CD8-positive, alpha-beta T cell (primary cell): ENCODE measurements at regions of chr6 and their contacts with region 1.

Region 1: DNA sequence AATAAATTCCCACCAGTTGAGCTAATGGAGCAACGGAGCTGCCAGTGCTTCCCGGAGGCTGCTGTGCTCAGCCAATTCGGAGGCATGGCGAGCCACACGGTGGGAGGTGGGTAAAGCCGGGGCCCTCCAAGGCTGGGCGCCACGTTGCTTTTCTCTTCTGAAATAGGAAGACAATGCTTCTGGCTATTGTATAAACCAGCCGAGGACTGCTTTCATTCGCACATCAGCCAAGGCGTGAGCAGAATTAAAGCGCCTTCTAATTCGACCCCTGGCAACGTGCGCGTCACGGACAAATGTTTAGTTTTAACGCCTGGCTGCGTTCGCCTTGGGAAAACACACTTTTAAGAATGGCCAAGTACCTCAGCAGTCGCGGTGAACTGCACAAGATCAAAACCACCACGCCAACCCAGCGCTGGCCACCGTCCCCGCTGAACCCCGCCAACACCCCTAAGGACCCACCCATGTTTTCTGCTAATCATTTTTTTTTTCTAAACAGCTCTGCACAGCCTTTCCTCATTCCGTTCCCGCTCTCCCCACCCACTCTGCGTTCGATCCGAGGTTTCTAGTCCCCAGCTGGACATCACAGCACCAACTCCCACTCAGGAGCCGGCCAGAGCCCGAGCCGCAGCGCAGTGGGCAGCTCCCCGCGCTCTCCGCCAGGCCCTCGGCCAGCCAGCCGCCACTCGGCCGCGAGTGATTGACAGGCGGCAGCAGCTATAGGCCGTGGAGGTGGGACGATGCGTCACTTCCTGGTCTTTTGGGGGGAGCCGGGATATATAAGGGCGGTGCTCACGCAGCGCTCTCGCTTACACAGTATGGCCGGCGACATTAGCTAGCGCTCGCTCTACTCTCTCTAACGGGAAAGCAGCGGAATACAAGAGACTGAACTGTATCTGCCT is at the start of gene AMD1:
- DNase-seq: peak; percentile 89 to 98 (median 96)
- ATAC-seq: peak; percentile 71
- H3K4me3 ChIP-seq: peak within 1 kb of the TSS; percentile 83 to 90
- H3K4me3 Mint-ChIP-seq: peak within 1 kb of the TSS; percentile 99
- H3K27ac ChIP-seq: peak within 1 kb of the TSS; percentile 92 to 95
- H3K27ac Mint-ChIP-seq: peak within 1 kb of the TSS; percentile 99
- H3K4me1 ChIP-seq: peaks cover 25% of the 10 kb centered on the region
- H3K4me1 Mint-ChIP-seq: peaks cover 33% of the 10 kb centered on the region
- H3K27me3 ChIP-seq: no peaks in the 10 kb centered on the region
- H3K27me3 Mint-ChIP-seq: no peaks in the 10 kb centered on the region
- CTCF ChIP-seq: no peak
- total RNA-seq, gene AMD1: 161 to 167 TPM

Region 2: DNA sequence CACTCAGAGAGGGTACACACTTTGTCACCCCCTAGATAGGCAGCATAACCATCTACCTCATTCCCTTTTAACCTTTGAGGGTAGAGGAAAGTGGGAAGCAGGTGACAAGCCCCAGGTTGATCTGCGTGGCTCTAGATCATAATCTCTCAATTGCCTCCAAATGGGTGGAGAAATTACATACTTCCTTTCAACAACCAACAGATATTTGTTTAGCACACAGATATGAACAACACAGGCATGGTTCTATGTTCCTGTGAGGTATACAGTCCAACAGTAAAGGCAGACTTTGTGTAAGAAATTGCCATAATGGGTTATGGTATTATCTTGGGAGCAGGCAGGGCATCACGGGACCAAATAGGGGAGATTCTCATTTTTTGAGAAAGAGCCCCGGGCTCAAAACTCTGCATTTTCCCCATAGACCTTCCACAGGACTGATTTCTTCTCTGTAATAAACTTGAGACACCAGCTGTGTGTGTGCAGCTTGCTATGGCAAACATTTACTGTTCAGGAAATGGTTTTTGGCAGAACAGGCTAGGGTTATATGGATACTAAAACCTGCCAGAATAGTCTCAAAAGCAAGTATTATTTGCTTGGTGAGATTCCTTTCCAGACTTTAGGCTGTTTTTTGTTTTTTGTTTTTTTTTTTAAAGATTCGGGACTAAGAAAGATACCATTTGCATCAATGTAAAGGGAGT is 1618.1 kb before region 1 on chr6:
- CTCF ChIA-PET with region 1: no interaction called
- POLR2A ChIA-PET with region 1: no interaction called
- intact Hi-C with region 1: no loop called
- DNase-seq: no peak
- ATAC-seq: no peak
- H3K4me3 ChIP-seq: no peak overlapping the region
- H3K4me3 Mint-ChIP-seq: no peak overlapping the region
- H3K27ac ChIP-seq: no peak overlapping the region
- H3K27ac Mint-ChIP-seq: no peak overlapping the region
- H3K4me1 ChIP-seq: no peaks in the 10 kb centered on the region
- H3K4me1 Mint-ChIP-seq: no peaks in the 10 kb centered on the region
- H3K27me3 ChIP-seq: no peaks in the 10 kb centered on the region
- H3K27me3 Mint-ChIP-seq: peaks cover 5% of the 10 kb centered on the region
- CTCF ChIP-seq: no peak

Region 3: GRCh38 chr6:109690737-109691621 is 1183.3 kb before region 1 on chr6 and contains the starts of genes AK9 and FIG4:
- CTCF ChIA-PET with region 1: no interaction called
- POLR2A ChIA-PET with region 1: interaction called, 6 read pairs
- intact Hi-C with region 1: loop called in 1 of 2 experiments (anchors 2 kb)
- DNase-seq: peak; percentile 68 to 93 (median 90)
- ATAC-seq: peak; percentile 96
- H3K4me3 ChIP-seq: peak within 1 kb of the TSS; percentile 85 to 91
- H3K4me3 Mint-ChIP-seq: peak within 1 kb of the TSS; percentile 93
- H3K27ac ChIP-seq: peak within 1 kb of the TSS; percentile 81 to 91
- H3K27ac Mint-ChIP-seq: peak within 1 kb of the TSS; percentile 98
- H3K4me1 ChIP-seq: peaks cover 22% of the 10 kb centered on the region
- H3K4me1 Mint-ChIP-seq: peaks cover 27% of the 10 kb centered on the region
- H3K27me3 ChIP-seq: no peaks in the 10 kb centered on the region
- H3K27me3 Mint-ChIP-seq: no peaks in the 10 kb centered on the region
- CTCF ChIP-seq: no peak
- total RNA-seq, gene AK9: 5.1 to 6.5 TPM
- total RNA-seq, gene FIG4: 2.3 TPM

Region 4: DNA sequence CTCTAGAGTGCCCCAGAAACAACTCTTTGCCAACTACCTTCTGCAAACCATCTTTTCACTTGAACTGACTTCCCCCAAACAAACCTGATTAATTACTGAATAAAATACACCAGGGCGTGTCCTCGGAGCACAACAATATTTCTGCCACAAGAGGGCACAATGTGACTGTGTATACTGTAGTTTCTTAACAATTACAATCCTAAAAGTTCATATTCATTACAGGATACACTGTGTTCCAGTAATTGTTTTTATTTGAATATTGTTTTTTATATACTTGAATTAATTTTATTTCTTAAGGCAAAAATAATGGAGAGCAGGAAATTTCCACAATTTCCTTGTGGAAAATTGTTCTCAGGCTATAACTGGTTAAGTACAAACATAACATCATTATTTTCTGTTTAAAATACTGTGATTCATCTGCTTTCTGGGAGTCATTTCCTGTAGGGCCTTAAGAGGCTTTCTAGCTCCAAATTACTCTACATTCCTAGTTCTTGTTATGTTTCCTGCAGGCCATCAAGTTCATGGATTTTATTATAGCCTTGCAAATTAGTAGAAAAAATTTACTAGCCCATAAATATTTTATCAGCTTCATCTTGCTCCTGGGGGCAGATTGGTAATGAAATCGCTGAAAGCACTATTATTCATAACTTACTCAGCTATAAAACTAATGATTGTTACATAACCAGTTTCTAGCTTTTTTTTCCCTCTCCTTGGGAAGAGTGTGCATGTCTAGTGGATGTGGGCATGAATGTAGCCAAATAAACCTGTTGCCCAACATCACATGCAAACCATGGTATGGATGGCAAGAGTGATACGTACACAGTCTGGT is 345.9 kb before region 1 on chr6:
- CTCF ChIA-PET with region 1: interaction called, 3 read pairs
- POLR2A ChIA-PET with region 1: no interaction called
- intact Hi-C with region 1: loop called (anchors 2 kb)
- DNase-seq: peak in 7 of 9 experiments; percentile 22 to 75 (median 53)
- ATAC-seq: peak; percentile 56
- H3K4me3 ChIP-seq: no peak overlapping the region
- H3K4me3 Mint-ChIP-seq: no peak overlapping the region
- H3K27ac ChIP-seq: no peak overlapping the region
- H3K27ac Mint-ChIP-seq: no peak overlapping the region
- H3K4me1 ChIP-seq: no peaks in the 10 kb centered on the region
- H3K4me1 Mint-ChIP-seq: no peaks in the 10 kb centered on the region
- H3K27me3 ChIP-seq: no peaks in the 10 kb centered on the region
- H3K27me3 Mint-ChIP-seq: peaks cover 3% of the 10 kb centered on the region
- CTCF ChIP-seq: peak; percentile 87

Region 5: DNA sequence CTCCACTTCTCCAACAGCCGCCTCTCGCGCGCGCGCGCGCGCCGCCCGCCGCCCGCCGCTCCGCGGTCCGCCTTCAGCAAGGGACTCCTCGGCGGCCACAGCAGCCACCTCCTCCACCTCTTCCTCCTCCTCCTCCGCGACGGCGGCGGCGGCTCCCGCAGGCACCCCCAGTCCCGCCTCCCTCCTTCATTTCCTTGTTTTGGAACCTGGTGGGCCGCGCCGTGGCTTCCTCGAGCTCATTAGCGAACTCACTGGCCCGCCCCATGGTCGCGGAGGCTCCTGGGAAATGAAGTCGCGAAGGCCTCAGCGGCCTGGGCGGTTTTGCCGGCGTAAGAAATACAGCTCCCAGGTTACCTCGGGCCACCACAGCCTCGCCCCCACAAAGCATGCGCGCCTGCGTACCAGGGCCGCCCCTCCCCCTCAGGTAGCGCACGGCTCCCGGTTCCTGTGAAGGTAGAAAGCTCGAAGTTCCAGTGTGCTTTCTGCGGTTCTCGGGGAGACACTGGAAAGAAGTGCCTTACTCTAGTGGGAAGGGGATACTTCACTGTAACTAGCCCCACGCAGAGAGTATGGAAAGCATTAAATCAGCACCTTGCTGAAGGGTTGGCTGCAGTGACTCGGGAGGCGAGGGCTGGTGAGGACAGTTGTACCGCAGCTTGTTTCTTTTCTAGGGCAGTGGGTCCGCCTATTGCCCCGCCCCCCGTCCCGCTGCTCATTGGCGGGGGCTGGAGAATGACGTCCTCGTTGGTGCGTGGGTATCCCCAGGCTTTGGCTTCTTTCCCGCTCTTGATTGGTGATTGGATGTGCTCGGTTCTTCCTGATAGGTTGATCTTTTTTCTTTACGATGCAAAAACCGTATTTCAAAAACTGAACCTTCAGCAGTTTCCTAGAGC is 58.8 kb before region 1 on chr6 and contains the start of gene CDK19:
- CTCF ChIA-PET with region 1: interaction called, 22 read pairs
- POLR2A ChIA-PET with region 1: interaction called, 298 read pairs
- intact Hi-C with region 1: loop called (anchors 1 kb)
- DNase-seq: peak; percentile 96 to 99 (median 98)
- ATAC-seq: peak; percentile 81
- H3K4me3 ChIP-seq: peak within 1 kb of the TSS; percentile 83 to 89
- H3K4me3 Mint-ChIP-seq: peak within 1 kb of the TSS; percentile 98
- H3K27ac ChIP-seq: peak within 1 kb of the TSS; percentile 88 to 95
- H3K27ac Mint-ChIP-seq: peak within 1 kb of the TSS; percentile 99
- H3K4me1 ChIP-seq: peaks cover 12% of the 10 kb centered on the region
- H3K4me1 Mint-ChIP-seq: peaks cover 23% of the 10 kb centered on the region
- H3K27me3 ChIP-seq: no peaks in the 10 kb centered on the region
- H3K27me3 Mint-ChIP-seq: no peaks in the 10 kb centered on the region
- CTCF ChIP-seq: no peak
- total RNA-seq, gene CDK19: 4.9 to 5.0 TPM

Region 6: GRCh38 chr6:110949679-110950285 is 75.6 kb after region 1 on chr6:
- CTCF ChIA-PET with region 1: interaction called, 14 read pairs
- POLR2A ChIA-PET with region 1: interaction called, 4 read pairs
- intact Hi-C with region 1: no loop called
- DNase-seq: peak in 2 of 9 experiments; percentile 48 to 64
- ATAC-seq: peak; percentile 46
- H3K4me3 ChIP-seq: no peak overlapping the region
- H3K4me3 Mint-ChIP-seq: no peak overlapping the region
- H3K27ac ChIP-seq: no peak overlapping the region
- H3K27ac Mint-ChIP-seq: no peak overlapping the region
- H3K4me1 ChIP-seq: peaks cover 5% of the 10 kb centered on the region
- H3K4me1 Mint-ChIP-seq: peaks cover 4% of the 10 kb centered on the region
- H3K27me3 ChIP-seq: no peaks in the 10 kb centered on the region
- H3K27me3 Mint-ChIP-seq: peaks cover 5% of the 10 kb centered on the region
- CTCF ChIP-seq: peak; percentile 58

Region 7: GRCh38 chr6:110981202-110981600 is 107.0 kb after region 1 on chr6:
- CTCF ChIA-PET with region 1: no interaction called
- POLR2A ChIA-PET with region 1: interaction called, 46 read pairs
- intact Hi-C with region 1: loop called (anchors 1 to 2 kb)
- DNase-seq: peak in 1 of 9 experiments; percentile 49
- ATAC-seq: peak; percentile 1
- H3K4me3 ChIP-seq: peak overlapping the region; percentile 85 to 95
- H3K4me3 Mint-ChIP-seq: peak overlapping the region; percentile 99
- H3K27ac ChIP-seq: peak overlapping the region; percentile 90 to 97
- H3K27ac Mint-ChIP-seq: peak overlapping the region; percentile 100
- H3K4me1 ChIP-seq: peaks cover 6% of the 10 kb centered on the region
- H3K4me1 Mint-ChIP-seq: peaks cover 45% of the 10 kb centered on the region
- H3K27me3 ChIP-seq: no peaks in the 10 kb centered on the region
- H3K27me3 Mint-ChIP-seq: no peaks in the 10 kb centered on the region
- CTCF ChIP-seq: no peak

Region 8: GRCh38 chr6:111483736-111484632 is 609.8 kb after region 1 on chr6:
- CTCF ChIA-PET with region 1: no interaction called
- POLR2A ChIA-PET with region 1: interaction called, 5 read pairs
- intact Hi-C with region 1: loop called (anchors 1 to 10 kb)
- DNase-seq: peak in 6 of 9 experiments; percentile 56 to 93 (median 78)
- ATAC-seq: peak; percentile 24
- H3K4me3 ChIP-seq: peak overlapping the region; percentile 88 to 92
- H3K4me3 Mint-ChIP-seq: peak overlapping the region; percentile 99
- H3K27ac ChIP-seq: peak overlapping the region; percentile 89 to 91
- H3K27ac Mint-ChIP-seq: peak overlapping the region; percentile 99
- H3K4me1 ChIP-seq: peaks cover 12% of the 10 kb centered on the region
- H3K4me1 Mint-ChIP-seq: peaks cover 45% of the 10 kb centered on the region
- H3K27me3 ChIP-seq: no peaks in the 10 kb centered on the region
- H3K27me3 Mint-ChIP-seq: no peaks in the 10 kb centered on the region
- CTCF ChIP-seq: no peak

Region 9: GRCh38 chr6:111793711-111794111 is 919.5 kb after region 1 on chr6:
- CTCF ChIA-PET with region 1: no interaction called
- POLR2A ChIA-PET with region 1: no interaction called
- intact Hi-C with region 1: no loop called
- DNase-seq: peak; percentile 33 to 85 (median 54)
- ATAC-seq: peak; percentile 73
- H3K4me3 ChIP-seq: peak overlapping the region; percentile 48 to 62
- H3K4me3 Mint-ChIP-seq: peak overlapping the region; percentile 85
- H3K27ac ChIP-seq: peak overlapping the region; percentile 53 to 75
- H3K27ac Mint-ChIP-seq: peak overlapping the region; percentile 94
- H3K4me1 ChIP-seq: peaks cover 60% of the 10 kb centered on the region
- H3K4me1 Mint-ChIP-seq: peaks cover 71% of the 10 kb centered on the region
- H3K27me3 ChIP-seq: no peaks in the 10 kb centered on the region
- H3K27me3 Mint-ChIP-seq: no peaks in the 10 kb centered on the region
- CTCF ChIP-seq: no peak